Activated CD4-positive, alpha-beta memory T cell treated with anti-CD3 and anti-CD28 coated beads for 36 hours (primary cell): ENCODE measurements at regions of chr7 and their contacts with region 1.

Region 1: DNA sequence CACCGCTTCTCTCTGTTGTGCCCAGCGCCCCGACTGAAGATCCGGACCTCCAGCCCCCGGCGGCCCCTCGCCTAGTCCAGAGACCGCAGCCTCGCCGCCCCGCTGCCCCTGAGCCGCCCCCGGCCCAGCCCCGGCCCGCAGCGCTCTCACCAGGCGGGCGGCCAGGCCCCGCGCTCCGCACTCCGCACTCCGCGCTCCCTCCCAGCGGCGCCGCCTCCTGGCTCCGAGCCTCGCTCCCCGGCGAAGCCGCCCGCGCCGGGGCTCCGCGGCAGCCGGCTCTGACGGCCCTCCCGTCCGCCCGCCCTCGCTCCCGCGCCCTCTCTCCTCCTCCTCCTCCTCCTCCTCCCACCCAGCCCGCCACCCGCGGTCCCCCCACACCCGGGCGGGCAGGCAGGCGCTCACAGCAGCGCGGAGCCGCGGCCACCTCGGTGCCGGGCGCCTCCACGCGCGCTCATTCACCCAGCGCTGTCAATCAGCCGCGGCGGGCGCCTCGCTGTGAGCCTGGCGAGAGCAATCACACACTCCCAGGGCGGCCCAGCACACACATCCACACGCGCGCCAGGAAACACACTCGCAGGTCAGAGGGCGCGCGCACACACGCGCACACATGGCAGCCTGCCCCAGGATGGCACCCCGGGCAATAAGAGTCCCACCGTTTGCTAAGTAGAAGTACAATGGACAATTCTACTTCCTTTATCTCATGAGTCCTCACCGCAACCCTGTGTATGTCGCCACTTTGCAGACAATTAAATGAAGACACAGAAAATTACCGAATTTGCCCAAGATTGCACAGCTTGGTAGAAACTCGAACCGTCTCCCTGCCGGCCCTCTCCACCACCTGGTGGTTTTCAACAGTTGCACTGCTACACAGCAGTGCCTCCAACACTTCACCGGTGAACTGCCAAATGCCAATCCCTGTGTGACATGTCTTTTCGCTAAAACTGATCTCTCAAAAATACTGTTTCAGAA is at the start of gene PRRT4:
- DNase-seq: peak; percentile 48
- H3K4me3 Mint-ChIP-seq: peak within 1 kb of the TSS; percentile 69
- H3K27ac Mint-ChIP-seq: no peak within 1 kb of the TSS
- H3K4me1 Mint-ChIP-seq: peaks cover 21% of the 10 kb centered on the region
- H3K27me3 Mint-ChIP-seq: peaks cover 42% of the 10 kb centered on the region
- total RNA-seq, gene PRRT4: 0.10 to 0.12 TPM

Region 2: DNA sequence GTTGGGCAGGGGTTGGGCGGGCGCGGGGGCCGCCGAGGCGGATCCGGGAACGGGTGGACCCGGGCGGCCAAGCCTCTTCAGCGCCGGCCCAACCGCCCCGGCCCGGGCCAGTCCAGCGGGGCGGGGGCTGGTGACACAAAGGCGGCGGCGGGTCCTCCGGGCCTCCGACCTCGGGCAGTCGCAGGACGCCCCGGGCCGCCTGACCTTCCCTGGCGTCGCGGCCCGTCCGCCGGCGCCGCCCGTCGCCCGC is 169.1 kb after region 1 on chr7:
- CTCF ChIA-PET with region 1: no interaction called
- POLR2A ChIA-PET with region 1: no interaction called
- intact Hi-C with region 1: no loop called
- DNase-seq: no peak
- H3K4me3 Mint-ChIP-seq: no peak overlapping the region
- H3K27ac Mint-ChIP-seq: no peak overlapping the region
- H3K4me1 Mint-ChIP-seq: peaks cover 28% of the 10 kb centered on the region
- H3K27me3 Mint-ChIP-seq: no peaks in the 10 kb centered on the region

Region 3: DNA sequence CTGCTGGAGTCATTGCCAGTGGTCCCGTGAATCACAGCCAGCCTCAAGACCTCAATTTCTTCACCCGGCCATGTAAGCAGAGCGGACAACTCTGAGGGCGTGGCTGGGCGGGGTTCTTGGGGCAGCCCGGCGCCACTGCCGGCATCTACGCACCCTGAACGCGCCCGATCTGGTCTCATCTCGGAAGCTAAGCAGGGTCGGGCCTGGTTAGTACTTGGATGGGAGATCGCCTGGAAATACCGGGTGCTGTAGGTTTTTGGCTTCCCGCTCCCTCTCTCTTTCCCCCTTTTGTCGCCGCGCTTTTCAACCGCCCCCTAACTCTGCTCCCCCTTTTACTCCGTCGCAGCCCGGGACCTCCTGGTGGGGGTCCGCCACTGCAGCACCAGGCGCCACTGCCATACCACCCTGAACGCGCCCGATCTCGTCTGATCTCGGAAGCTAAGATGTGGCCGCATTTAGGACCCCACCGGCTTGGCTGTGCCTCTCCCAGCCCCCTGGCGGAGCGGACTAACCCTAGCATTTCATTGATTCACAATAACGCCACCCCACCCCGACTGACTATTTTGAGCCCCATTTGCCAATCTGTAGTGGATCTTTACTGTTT is 335.7 kb after region 1 on chr7:
- CTCF ChIA-PET with region 1: no interaction called
- POLR2A ChIA-PET with region 1: no interaction called
- intact Hi-C with region 1: loop called (anchors 5 kb)
- DNase-seq: peak; percentile 74
- H3K4me3 Mint-ChIP-seq: peak overlapping the region; percentile 64
- H3K27ac Mint-ChIP-seq: no peak overlapping the region
- H3K4me1 Mint-ChIP-seq: peaks cover 6% of the 10 kb centered on the region
- H3K27me3 Mint-ChIP-seq: peaks cover 44% of the 10 kb centered on the region